Right cardiac atrium (tissue), 5 donors: ENCODE measurements at regions of chr11 and their contacts with region 1.

Region 1: GRCh38 chr11:121591405-121592033 is 138.8 kb upstream of the SORL1-AS1 start:
- DNase-seq: peak in 1 of 3 donors; percentile 40
- ATAC-seq: peak; percentile 74 to 79
- H3K4me3 ChIP-seq: no peak overlapping the region
- H3K27ac ChIP-seq: no peak overlapping the region
- H3K4me1 ChIP-seq: no peaks in the 10 kb centered on the region
- H3K27me3 ChIP-seq: no peaks in the 10 kb centered on the region

Region 2: DNA sequence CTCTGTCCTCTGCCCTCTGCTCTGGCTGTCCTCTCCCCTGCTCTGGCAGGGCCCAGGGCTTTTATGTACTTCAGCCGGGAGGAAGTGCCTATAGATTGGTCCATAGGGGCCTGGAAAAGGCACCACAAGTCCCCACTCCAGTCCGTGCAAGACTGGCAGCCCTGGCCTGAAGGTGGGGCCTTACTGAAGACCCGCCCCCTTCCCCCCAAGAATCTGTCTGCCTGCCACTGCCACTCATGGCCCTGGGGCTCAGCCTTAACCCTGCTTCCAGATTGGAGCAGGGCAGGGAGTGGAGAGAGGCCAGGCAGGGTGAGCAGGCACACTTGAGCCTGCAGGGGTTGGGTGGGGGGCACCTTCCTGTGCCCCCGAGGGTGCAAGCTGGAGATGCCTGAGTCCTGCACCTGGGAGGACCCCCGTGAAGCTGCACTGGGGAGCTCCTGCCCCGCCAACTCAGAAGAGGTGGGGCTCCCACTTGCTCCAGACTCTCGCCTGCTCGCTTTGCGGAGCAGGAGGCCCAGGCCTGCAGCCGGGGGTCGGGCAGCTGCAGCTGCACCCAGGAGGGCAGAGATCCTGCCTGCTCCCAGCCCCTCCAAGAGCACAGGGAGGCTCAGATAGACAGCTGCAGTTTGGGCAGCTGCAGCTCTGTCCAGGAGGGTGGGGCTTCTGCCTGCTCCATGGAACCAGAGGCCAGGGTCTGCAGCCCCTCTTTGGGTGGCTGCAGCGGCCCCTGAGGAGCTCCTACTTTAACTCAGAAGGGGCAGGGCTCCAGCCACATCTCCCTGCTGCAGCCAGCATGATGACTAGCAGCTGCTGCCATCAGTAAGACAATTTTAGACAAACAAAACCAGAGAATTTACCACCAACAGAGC is 349.9 kb before region 1 on chr11:
- intact Hi-C with region 1: loop called in 1 of 4 experiments (anchors 5 kb)
- DNase-seq: peak in 2 of 3 donors; percentile 33 to 61
- ATAC-seq: peak; percentile 27 to 46
- H3K4me3 ChIP-seq: no peak overlapping the region
- H3K27ac ChIP-seq: no peak overlapping the region
- H3K4me1 ChIP-seq: peaks cover 4% of the 10 kb centered on the region
- H3K27me3 ChIP-seq: no peaks in the 10 kb centered on the region

Region 3: GRCh38 chr11:121250843-121251242 is 340.7 kb before region 1 on chr11:
- intact Hi-C with region 1: loop called in 1 of 4 experiments (anchors 10 kb)
- DNase-seq: no peak
- ATAC-seq: no peak
- H3K4me3 ChIP-seq: no peak overlapping the region
- H3K27ac ChIP-seq: no peak overlapping the region
- H3K4me1 ChIP-seq: no peaks in the 10 kb centered on the region
- H3K27me3 ChIP-seq: no peaks in the 10 kb centered on the region

Region 4: GRCh38 chr11:121318848-121319834 is 272.4 kb before region 1 on chr11:
- intact Hi-C with region 1: loop called (anchors 1 to 5 kb)
- DNase-seq: no peak
- ATAC-seq: peak; percentile 59 to 70
- H3K4me3 ChIP-seq: no peak overlapping the region
- H3K27ac ChIP-seq: no peak overlapping the region
- H3K4me1 ChIP-seq: no peaks in the 10 kb centered on the region
- H3K27me3 ChIP-seq: no peaks in the 10 kb centered on the region

Region 5: GRCh38 chr11:121426476-121427399 is 164.8 kb before region 1 on chr11:
- intact Hi-C with region 1: no loop called
- DNase-seq: peak; percentile 55 to 84 (median 82)
- ATAC-seq: peak; percentile 85 to 90
- H3K4me3 ChIP-seq: peak overlapping the region; percentile 43
- H3K27ac ChIP-seq: peak overlapping the region; percentile 12
- H3K4me1 ChIP-seq: no peaks in the 10 kb centered on the region
- H3K27me3 ChIP-seq: no peaks in the 10 kb centered on the region